ENCODE measurements at regions of chr20 and their contacts with region 1.

Region 1: GRCh38 chr20:24917797-24918578 is 31.1 kb upstream of the CST7 start:
- DNase-seq: peak; percentile 16
- ATAC-seq: peak; percentile 92
- H3K4me3 ChIP-seq: no peak overlapping the region
- H3K27ac ChIP-seq: no peak overlapping the region
- H3K4me1 ChIP-seq: peaks cover 11% of the 10 kb centered on the region
- H3K27me3 ChIP-seq: no peaks in the 10 kb centered on the region; a peak in 1 of 4 replicates
- CTCF ChIP-seq: peak; percentile 76 to 89 (median 77)
- EP300 ChIP-seq: no peak
- POLR2A ChIP-seq: no peak
- RAD21 ChIP-seq: peak; percentile 87

Region 2: GRCh38 chr20:23937303-23938117 is 980.5 kb before region 1 on chr20:
- CTCF ChIA-PET with region 1: no interaction called
- POLR2A ChIA-PET with region 1: no interaction called
- RAD21 ChIA-PET with region 1: no interaction called
- SMC1A ChIA-PET with region 1: no interaction called
- in situ Hi-C with region 1: loop called (anchors 25 kb)
- intact Hi-C with region 1: no loop called
- DNase-seq: peak; percentile 3
- ATAC-seq: peak; percentile 89
- H3K4me3 ChIP-seq: no peak overlapping the region
- H3K27ac ChIP-seq: no peak overlapping the region
- H3K4me1 ChIP-seq: no peaks in the 10 kb centered on the region
- H3K27me3 ChIP-seq: no peaks in the 10 kb centered on the region
- CTCF ChIP-seq: peak; percentile 62 to 83 (median 69); a peak in 5 of 6 replicates
- EP300 ChIP-seq: no peak
- POLR2A ChIP-seq: no peak
- RAD21 ChIP-seq: peak; percentile 79

Region 3: DNA sequence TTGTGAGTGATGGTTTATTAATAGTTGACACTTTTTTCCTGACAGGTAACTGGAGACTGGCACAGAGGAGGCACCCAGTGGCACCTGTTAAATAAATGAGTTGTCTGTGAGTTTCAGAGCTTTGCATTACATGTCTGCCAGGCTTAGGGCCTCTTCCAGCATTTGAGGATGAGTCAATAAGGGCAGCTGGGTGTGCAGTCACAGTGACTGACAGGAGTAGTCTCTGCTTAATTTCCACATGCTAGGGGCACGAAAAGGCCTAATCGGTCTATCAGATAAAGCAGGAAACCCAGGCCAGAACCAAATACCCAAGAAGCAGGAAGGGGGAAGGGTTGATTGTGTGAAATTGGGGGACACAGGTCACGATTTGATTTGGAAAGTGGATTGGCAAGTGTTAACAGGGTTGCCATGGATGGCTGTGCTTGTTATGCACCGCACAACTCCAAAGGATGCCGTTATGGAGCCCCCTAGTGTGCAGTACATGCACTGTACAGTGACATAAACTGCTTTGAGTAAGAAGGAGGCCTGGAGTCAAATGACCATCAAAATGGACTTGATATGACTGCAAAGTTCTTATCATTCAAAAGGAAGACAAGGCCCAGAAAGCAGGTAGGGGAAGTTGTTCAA is 817.5 kb before region 1 on chr20:
- CTCF ChIA-PET with region 1: interaction called, 16 read pairs
- POLR2A ChIA-PET with region 1: no interaction called
- RAD21 ChIA-PET with region 1: interaction called, 4 read pairs
- SMC1A ChIA-PET with region 1: no interaction called
- in situ Hi-C with region 1: no loop called
- intact Hi-C with region 1: loop called (anchors 2 kb)
- DNase-seq: no peak
- ATAC-seq: peak; percentile 99
- H3K4me3 ChIP-seq: no peak overlapping the region
- H3K27ac ChIP-seq: no peak overlapping the region
- H3K4me1 ChIP-seq: no peaks in the 10 kb centered on the region
- H3K27me3 ChIP-seq: peaks cover 0 to 7% of the 10 kb centered on the region in 2 experiments; a peak in 2 of 4 replicates
- CTCF ChIP-seq: peak; percentile 64 to 79 (median 79)
- EP300 ChIP-seq: no peak
- POLR2A ChIP-seq: no peak
- RAD21 ChIP-seq: peak; percentile 45; the same call in 1 of the 2 replicates

Region 4: GRCh38 chr20:24160563-24161375 is 757.2 kb before region 1 on chr20:
- CTCF ChIA-PET with region 1: interaction called, 4 read pairs
- POLR2A ChIA-PET with region 1: no interaction called
- RAD21 ChIA-PET with region 1: interaction called, 4 read pairs
- SMC1A ChIA-PET with region 1: no interaction called
- in situ Hi-C with region 1: no loop called
- intact Hi-C with region 1: loop called (anchors 1 kb)
- DNase-seq: no peak
- ATAC-seq: peak; percentile 60
- H3K4me3 ChIP-seq: no peak overlapping the region
- H3K27ac ChIP-seq: no peak overlapping the region
- H3K4me1 ChIP-seq: no peaks in the 10 kb centered on the region
- H3K27me3 ChIP-seq: no peaks in the 10 kb centered on the region
- CTCF ChIP-seq: peak; percentile 60 to 64 (median 62); a peak in 5 of 6 replicates
- EP300 ChIP-seq: no peak
- POLR2A ChIP-seq: no peak
- RAD21 ChIP-seq: peak; percentile 48

Region 5: DNA sequence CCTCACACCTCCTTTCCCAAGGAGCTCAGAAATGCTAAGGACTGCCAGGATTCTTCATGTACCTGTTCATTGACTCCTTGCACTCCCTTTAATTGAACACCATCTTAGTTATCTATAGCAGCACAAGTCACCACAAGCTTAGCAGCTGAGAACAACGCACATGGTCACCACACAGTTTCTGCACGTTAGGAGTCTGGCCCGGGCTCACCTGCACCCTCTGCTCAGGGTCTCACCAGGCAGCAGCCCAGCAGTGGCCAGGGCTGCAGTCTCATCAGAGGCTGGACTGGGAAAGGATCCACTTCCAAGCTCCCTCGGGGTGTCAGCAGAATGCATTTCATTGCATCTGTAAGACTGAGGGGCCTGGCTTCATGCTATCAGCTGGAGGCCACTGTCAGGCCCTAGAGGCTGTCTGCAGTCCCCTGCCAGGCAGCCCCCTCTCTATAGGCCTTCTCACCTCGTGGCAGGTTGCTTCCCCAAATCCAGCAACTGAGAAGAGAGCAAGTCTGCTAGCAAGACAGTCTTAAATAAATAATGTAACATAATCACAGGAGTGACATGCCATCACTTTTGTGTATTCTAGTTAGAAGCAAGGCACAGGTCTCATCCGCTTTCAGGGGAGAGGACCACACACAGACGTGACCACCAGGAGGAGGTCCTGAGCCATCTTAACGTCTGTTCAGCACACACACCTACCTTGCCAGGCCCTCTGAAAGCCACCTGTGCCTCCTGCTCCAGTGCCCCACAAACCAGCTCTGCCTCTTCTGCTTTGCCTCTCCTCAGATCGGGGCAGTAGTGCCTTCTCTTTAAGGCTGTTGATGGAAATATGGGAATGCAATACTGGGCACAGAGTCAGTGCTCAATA is 134.1 kb before region 1 on chr20:
- CTCF ChIA-PET with region 1: interaction called, 4 read pairs
- POLR2A ChIA-PET with region 1: no interaction called
- RAD21 ChIA-PET with region 1: no interaction called
- SMC1A ChIA-PET with region 1: no interaction called
- in situ Hi-C with region 1: loop called (anchors 5 kb)
- intact Hi-C with region 1: loop called (anchors 1 kb)
- DNase-seq: peak; percentile 20
- ATAC-seq: peak; percentile 71
- H3K4me3 ChIP-seq: no peak overlapping the region
- H3K27ac ChIP-seq: no peak overlapping the region
- H3K4me1 ChIP-seq: no peaks in the 10 kb centered on the region; the same call in 1 of the 2 replicates
- H3K27me3 ChIP-seq: peaks cover 0 to 2% of the 10 kb centered on the region in 2 experiments; a peak in 2 of 4 replicates
- CTCF ChIP-seq: peak; percentile 32 to 41 (median 41); a peak in 4 of 6 replicates
- EP300 ChIP-seq: no peak
- POLR2A ChIP-seq: no peak
- RAD21 ChIP-seq: peak; percentile 53

Region 6: DNA sequence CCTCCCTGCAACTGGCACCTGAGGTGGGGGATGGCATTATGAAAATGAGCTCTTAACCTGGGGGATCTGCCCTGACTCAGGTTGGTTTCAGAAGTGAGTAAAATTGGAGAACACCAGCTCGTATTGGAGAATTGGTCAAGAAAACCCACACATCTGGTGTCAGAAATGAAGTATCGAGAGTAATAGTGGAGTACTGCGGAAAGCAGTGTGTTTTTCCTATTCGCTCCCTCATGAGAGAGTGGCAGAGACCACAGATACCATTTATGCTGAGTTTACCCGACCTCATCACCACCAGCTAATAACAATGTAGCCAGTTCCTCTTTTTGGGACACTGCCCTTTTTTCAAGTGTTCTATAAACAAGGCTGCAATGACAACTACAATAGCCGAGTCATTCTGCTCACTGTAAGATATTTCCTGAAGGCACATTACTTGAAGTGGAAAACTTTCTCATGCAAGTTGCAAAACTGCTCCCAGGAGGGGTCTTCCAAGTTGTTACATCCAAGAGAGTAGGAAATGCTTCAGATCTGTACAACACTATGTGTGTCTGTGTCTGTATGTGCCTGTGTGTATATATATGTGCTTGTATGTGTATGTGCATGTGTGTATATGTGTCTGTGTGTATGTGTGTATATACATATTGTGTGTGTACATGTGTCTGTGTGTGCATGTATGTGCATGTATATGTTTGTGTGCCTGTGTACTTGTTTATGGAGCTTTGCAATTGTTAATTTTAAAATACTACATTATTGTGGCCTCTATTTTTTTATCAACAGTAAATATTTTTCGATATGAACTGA is 74.9 kb before region 1 on chr20:
- CTCF ChIA-PET with region 1: interaction called, 3 read pairs
- POLR2A ChIA-PET with region 1: no interaction called
- RAD21 ChIA-PET with region 1: no interaction called
- SMC1A ChIA-PET with region 1: no interaction called
- in situ Hi-C with region 1: no loop called
- intact Hi-C with region 1: loop called (anchors 5 kb)
- DNase-seq: peak; percentile 98
- ATAC-seq: peak; percentile 95
- H3K4me3 ChIP-seq: peak overlapping the region; percentile 12
- H3K27ac ChIP-seq: peak overlapping the region; percentile 63
- H3K4me1 ChIP-seq: peaks cover 49% of the 10 kb centered on the region
- H3K27me3 ChIP-seq: no peaks in the 10 kb centered on the region
- CTCF ChIP-seq: no peak
- EP300 ChIP-seq: peak; percentile 86 to 92
- POLR2A ChIP-seq: no peak
- RAD21 ChIP-seq: no peak

Region 7: DNA sequence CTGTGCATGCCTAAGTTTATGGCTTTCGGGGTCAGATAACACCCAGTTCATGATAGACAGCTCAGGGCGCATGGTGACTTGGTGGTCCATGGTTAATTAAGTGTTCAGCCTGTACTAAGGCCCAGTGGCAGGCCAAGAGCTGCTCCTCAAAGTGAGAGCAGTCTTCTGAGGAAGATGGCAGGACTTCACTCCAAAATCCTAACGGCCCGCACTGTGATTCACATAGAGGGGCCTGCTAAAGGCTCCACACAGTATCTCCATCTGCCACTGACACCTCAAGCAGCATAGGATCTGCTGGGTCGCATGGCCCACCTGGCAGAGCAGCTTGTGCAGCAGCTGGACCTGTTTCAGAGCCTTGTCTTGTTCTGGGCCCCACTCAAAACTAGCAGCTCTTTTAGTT is 20.5 kb after region 1 on chr20:
- CTCF ChIA-PET with region 1: no interaction called
- POLR2A ChIA-PET with region 1: no interaction called
- RAD21 ChIA-PET with region 1: no interaction called
- SMC1A ChIA-PET with region 1: no interaction called
- in situ Hi-C with region 1: no loop called
- intact Hi-C with region 1: no loop called
- DNase-seq: no peak
- ATAC-seq: no peak
- H3K4me3 ChIP-seq: no peak overlapping the region
- H3K27ac ChIP-seq: no peak overlapping the region
- H3K4me1 ChIP-seq: no peaks in the 10 kb centered on the region
- H3K27me3 ChIP-seq: no peaks in the 10 kb centered on the region
- CTCF ChIP-seq: no peak
- EP300 ChIP-seq: no peak
- POLR2A ChIP-seq: no peak
- RAD21 ChIP-seq: no peak

Region 8: GRCh38 chr20:25254986-25255680 is 337.1 kb after region 1 on chr20:
- CTCF ChIA-PET with region 1: no interaction called
- POLR2A ChIA-PET with region 1: no interaction called
- RAD21 ChIA-PET with region 1: no interaction called
- SMC1A ChIA-PET with region 1: no interaction called
- in situ Hi-C with region 1: no loop called
- intact Hi-C with region 1: no loop called
- DNase-seq: no peak
- ATAC-seq: no peak
- H3K4me3 ChIP-seq: no peak overlapping the region
- H3K27ac ChIP-seq: no peak overlapping the region
- H3K4me1 ChIP-seq: peaks cover 16% of the 10 kb centered on the region
- H3K27me3 ChIP-seq: no peaks in the 10 kb centered on the region
- CTCF ChIP-seq: no peak
- EP300 ChIP-seq: no peak
- POLR2A ChIP-seq: no peak
- RAD21 ChIP-seq: no peak